ENCODE measurements at regions of chr6 and their contacts with region 1.

Region 1: GRCh38 chr6:33248925-33249731 is 22.5 kb downstream of the VPS52 start:
- DNase-seq: peak; percentile 97 to 99 (median 98)
- ATAC-seq: peak; percentile 96 to 97 (median 96)
- H3K4me3 ChIP-seq: peak overlapping the region; percentile 27 to 70 (median 64)
- H3K27ac ChIP-seq: peak overlapping the region; percentile 70 to 98 (median 92)
- H3K4me1 ChIP-seq: peaks cover 0 to 31% (median 20%) of the 10 kb centered on the region in 12 donors
- H3K27me3 ChIP-seq: no peaks in the 10 kb centered on the region
- CTCF ChIP-seq: peak in 7 of 12 donors; percentile 17 to 59 (median 30)
- POLR2A ChIP-seq: peak in 1 of 2 donors; percentile 80

Region 2: GRCh38 chr6:32894080-32895005 is 354.8 kb before region 1 on chr6:
- intact Hi-C with region 1: loop called in 2 of 10 experiments (anchors 2 to 5 kb)
- DNase-seq: peak; percentile 93 to 97 (median 95)
- ATAC-seq: peak; percentile 99 to 100 (median 100)
- H3K4me3 ChIP-seq: peak overlapping the region; percentile 47 to 94 (median 75)
- H3K27ac ChIP-seq: peak overlapping the region; percentile 78 to 94 (median 90)
- H3K4me1 ChIP-seq: peaks cover 0 to 20% (median 6%) of the 10 kb centered on the region in 12 donors
- H3K27me3 ChIP-seq: no peaks in the 10 kb centered on the region
- CTCF ChIP-seq: peak in 2 of 12 donors; percentile 12 to 22
- POLR2A ChIP-seq: peak; percentile 17 to 76

Region 3: DNA sequence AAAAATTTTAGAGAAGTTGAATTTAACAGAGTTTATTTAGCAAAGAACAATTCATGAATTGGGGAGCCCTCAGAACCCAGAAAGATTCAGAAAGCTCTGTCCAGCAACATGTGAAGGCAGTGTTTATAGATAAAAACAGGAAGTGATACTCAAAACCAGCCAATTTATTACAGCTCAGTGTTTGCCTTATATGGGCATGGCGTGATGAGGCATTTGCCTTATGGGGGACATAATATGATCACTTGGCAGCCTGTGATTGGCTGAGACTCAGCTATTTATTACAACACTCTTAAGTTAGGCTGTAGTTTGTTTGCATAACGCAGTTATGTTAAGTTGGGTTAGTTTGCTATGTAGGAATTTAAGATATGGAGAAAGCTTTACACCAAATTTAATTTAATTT is 187.1 kb before region 1 on chr6:
- intact Hi-C with region 1: no loop called
- DNase-seq: no peak
- ATAC-seq: no peak
- H3K4me3 ChIP-seq: no peak overlapping the region
- H3K27ac ChIP-seq: peak overlapping the region in 1 of 12 donors; percentile 27
- H3K4me1 ChIP-seq: peaks cover 0 to 22% (median 0%) of the 10 kb centered on the region in 12 donors
- H3K27me3 ChIP-seq: no peaks in the 10 kb centered on the region
- CTCF ChIP-seq: no peak
- POLR2A ChIP-seq: no peak

Region 4: GRCh38 chr6:33118525-33119123 is 130.5 kb before region 1 on chr6:
- intact Hi-C with region 1: loop called (anchors 1 to 5 kb)
- DNase-seq: no peak
- ATAC-seq: no peak
- H3K4me3 ChIP-seq: no peak overlapping the region
- H3K27ac ChIP-seq: no peak overlapping the region
- H3K4me1 ChIP-seq: peaks cover 0 to 24% (median 0%) of the 10 kb centered on the region in 12 donors
- H3K27me3 ChIP-seq: peaks cover 17 to 48% (median 25%) of the 10 kb centered on the region in 9 donors
- CTCF ChIP-seq: peak; percentile 77 to 96 (median 88)
- POLR2A ChIP-seq: no peak

Region 5: GRCh38 chr6:33161354-33162331 is 87.5 kb before region 1 on chr6:
- intact Hi-C with region 1: loop called (anchors 1 to 5 kb)
- DNase-seq: peak; percentile 84 to 92 (median 86)
- ATAC-seq: peak; percentile 38 to 94 (median 88)
- H3K4me3 ChIP-seq: peak overlapping the region in 11 of 12 donors; percentile 34 to 64 (median 52)
- H3K27ac ChIP-seq: peak overlapping the region in 8 of 12 donors; percentile 37 to 56 (median 54)
- H3K4me1 ChIP-seq: peaks cover 0 to 21% (median 10%) of the 10 kb centered on the region in 12 donors
- H3K27me3 ChIP-seq: no peaks in the 10 kb centered on the region
- CTCF ChIP-seq: peak; percentile 89 to 99 (median 94)
- POLR2A ChIP-seq: no peak

Region 6: GRCh38 chr6:33208091-33208967 is 40.8 kb before region 1 on chr6 and contains the start of gene RING1:
- intact Hi-C with region 1: loop called in 7 of 10 experiments (anchors 2 to 5 kb)
- DNase-seq: peak; percentile 91 to 94 (median 92)
- ATAC-seq: peak; percentile 45 to 84 (median 81)
- H3K4me3 ChIP-seq: peak within 1 kb of the TSS; percentile 78 to 99 (median 90)
- H3K27ac ChIP-seq: peak within 1 kb of the TSS; percentile 82 to 99 (median 94)
- H3K4me1 ChIP-seq: peaks cover 4 to 49% (median 34%) of the 10 kb centered on the region in 12 donors
- H3K27me3 ChIP-seq: peaks cover 0 to 5% (median 0%) of the 10 kb centered on the region in 9 donors
- CTCF ChIP-seq: no peak
- POLR2A ChIP-seq: peak; percentile 84 to 97
- total RNA-seq, gene RING1: 8.4 to 32.2 (median 27.3) TPM